ENCODE measurements at regions of chr7 and their contacts with region 1.

Region 1: GRCh38 chr7:139075031-139075652 is 34.4 kb downstream of the ZC3HAV1 start:
- DNase-seq: peak; percentile 71 to 78
- ATAC-seq: peak; percentile 92 to 94
- H3K4me3 ChIP-seq: no peak overlapping the region
- H3K27ac ChIP-seq: peak overlapping the region; percentile 46 to 73; a peak in 5 of 6 replicates
- H3K4me1 ChIP-seq: peaks cover 7% of the 10 kb centered on the region; the same call in 1 of the 3 replicates
- CTCF ChIP-seq: peak; percentile 91
- EP300 ChIP-seq: no peak
- POLR2A ChIP-seq: no peak
- RAD21 ChIP-seq: peak; percentile 69 to 71

Region 2: GRCh38 chr7:138584696-138585095 is 490.4 kb before region 1 on chr7:
- CTCF ChIA-PET with region 1: no interaction called
- POLR2A ChIA-PET with region 1: no interaction called
- DNase-seq: no peak
- ATAC-seq: no peak
- H3K4me3 ChIP-seq: no peak overlapping the region
- H3K27ac ChIP-seq: no peak overlapping the region
- H3K4me1 ChIP-seq: no peaks in the 10 kb centered on the region
- CTCF ChIP-seq: no peak
- EP300 ChIP-seq: no peak
- POLR2A ChIP-seq: no peak
- RAD21 ChIP-seq: no peak

Region 3: DNA sequence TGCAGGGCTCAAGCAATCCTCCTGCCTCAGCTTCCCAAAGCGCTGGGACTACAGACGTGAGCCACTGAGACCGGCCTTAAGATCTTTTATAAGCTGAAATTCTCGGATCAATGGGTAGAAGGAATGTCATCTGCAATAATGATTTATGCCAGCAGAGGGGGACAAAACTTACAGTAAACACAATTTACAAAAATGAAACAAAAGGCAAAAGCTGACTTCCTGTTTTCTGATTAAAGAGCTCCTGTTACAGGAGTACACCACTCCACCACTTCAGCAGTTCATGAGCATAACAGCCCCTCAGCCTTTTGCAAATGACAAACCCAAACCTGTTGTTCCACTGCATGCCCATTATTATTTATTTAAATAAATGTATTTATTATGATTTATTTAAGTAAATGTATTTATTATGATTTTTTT is 188.6 kb before region 1 on chr7:
- CTCF ChIA-PET with region 1: interaction called, 27 read pairs
- POLR2A ChIA-PET with region 1: no interaction called
- DNase-seq: peak; percentile 55 to 67
- ATAC-seq: no peak
- H3K4me3 ChIP-seq: no peak overlapping the region
- H3K27ac ChIP-seq: peak overlapping the region in 1 of 2 experiments; percentile 60; a peak in 3 of 6 replicates
- H3K4me1 ChIP-seq: peaks cover 27% of the 10 kb centered on the region
- CTCF ChIP-seq: peak; percentile 65
- EP300 ChIP-seq: no peak
- POLR2A ChIP-seq: no peak
- RAD21 ChIP-seq: peak; percentile 60 to 64

Region 4: GRCh38 chr7:139023076-139023475 is 52.1 kb before region 1 on chr7:
- CTCF ChIA-PET with region 1: interaction called, 35 read pairs
- POLR2A ChIA-PET with region 1: no interaction called
- DNase-seq: no peak
- ATAC-seq: no peak
- H3K4me3 ChIP-seq: no peak overlapping the region
- H3K27ac ChIP-seq: 0 out of 6 replicates have a peak overlapping the region, but pooled peaks of 1 of the 2 experiments have one; percentile 29
- H3K4me1 ChIP-seq: peaks cover 11% of the 10 kb centered on the region; the same call in 2 of the 3 replicates
- CTCF ChIP-seq: no peak
- EP300 ChIP-seq: no peak
- POLR2A ChIP-seq: no peak
- RAD21 ChIP-seq: no peak

Region 5: GRCh38 chr7:139049936-139050335 is 25.2 kb before region 1 on chr7:
- CTCF ChIA-PET with region 1: interaction called, 17 read pairs
- POLR2A ChIA-PET with region 1: no interaction called
- DNase-seq: no peak
- ATAC-seq: no peak
- H3K4me3 ChIP-seq: no peak overlapping the region
- H3K27ac ChIP-seq: no peak overlapping the region
- H3K4me1 ChIP-seq: peaks cover 2% of the 10 kb centered on the region; the same call in 1 of the 3 replicates
- CTCF ChIP-seq: no peak
- EP300 ChIP-seq: no peak
- POLR2A ChIP-seq: no peak
- RAD21 ChIP-seq: no peak

Region 6: DNA sequence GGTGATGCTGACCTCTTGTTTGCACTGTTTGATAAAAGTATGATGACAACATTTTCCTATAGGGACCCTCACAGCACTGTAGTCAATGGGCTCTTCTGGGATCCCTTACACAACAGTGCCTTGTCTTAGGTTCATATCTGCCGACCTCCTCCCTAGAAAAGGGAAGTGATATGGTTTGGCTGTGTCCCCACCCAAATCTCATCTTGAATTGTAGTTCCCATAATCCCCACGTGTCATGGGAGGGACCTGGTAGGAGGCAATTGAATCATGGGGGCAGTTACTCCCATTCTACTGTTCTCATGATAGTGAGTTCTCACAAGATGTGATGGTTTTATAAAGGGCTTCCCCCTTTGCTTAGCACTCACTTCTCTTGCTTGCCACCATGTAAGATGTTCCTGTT is 11.3 kb after region 1 on chr7:
- CTCF ChIA-PET with region 1: interaction called, 47 read pairs
- POLR2A ChIA-PET with region 1: no interaction called
- DNase-seq: no peak
- ATAC-seq: no peak
- H3K4me3 ChIP-seq: no peak overlapping the region
- H3K27ac ChIP-seq: no peak overlapping the region
- H3K4me1 ChIP-seq: no peaks in the 10 kb centered on the region
- CTCF ChIP-seq: no peak
- EP300 ChIP-seq: no peak
- POLR2A ChIP-seq: no peak
- RAD21 ChIP-seq: no peak

Region 7: GRCh38 chr7:139133335-139134139 is 58.4 kb after region 1 on chr7:
- CTCF ChIA-PET with region 1: interaction called, 17 read pairs
- POLR2A ChIA-PET with region 1: no interaction called
- DNase-seq: peak; percentile 87 to 90
- ATAC-seq: peak; percentile 99
- H3K4me3 ChIP-seq: peak overlapping the region; percentile 61
- H3K27ac ChIP-seq: peak overlapping the region; percentile 73 to 83
- H3K4me1 ChIP-seq: peaks cover 12% of the 10 kb centered on the region; the same call in 2 of the 3 replicates
- CTCF ChIP-seq: no peak
- EP300 ChIP-seq: no peak
- POLR2A ChIP-seq: peak; percentile 83
- RAD21 ChIP-seq: peak in 1 of 2 experiments; percentile 40; a peak in 3 of 5 replicates

Region 8: GRCh38 chr7:139180700-139181311 is 105.7 kb after region 1 on chr7:
- CTCF ChIA-PET with region 1: no interaction called
- POLR2A ChIA-PET with region 1: no interaction called
- DNase-seq: no peak
- ATAC-seq: no peak
- H3K4me3 ChIP-seq: no peak overlapping the region
- H3K27ac ChIP-seq: no peak overlapping the region
- H3K4me1 ChIP-seq: no peaks in the 10 kb centered on the region
- CTCF ChIP-seq: no peak
- EP300 ChIP-seq: no peak
- POLR2A ChIP-seq: no peak
- RAD21 ChIP-seq: no peak

Region 9: GRCh38 chr7:139730746-139731612 is 655.8 kb after region 1 on chr7:
- CTCF ChIA-PET with region 1: no interaction called
- POLR2A ChIA-PET with region 1: no interaction called
- DNase-seq: no peak
- ATAC-seq: peak; percentile 19 to 41; a peak in 4 of 6 replicates
- H3K4me3 ChIP-seq: peak overlapping the region; percentile 20; the same call in 1 of the 3 replicates
- H3K27ac ChIP-seq: peak overlapping the region; percentile 77 to 83
- H3K4me1 ChIP-seq: peaks cover 67% of the 10 kb centered on the region
- CTCF ChIP-seq: no peak
- EP300 ChIP-seq: no peak
- POLR2A ChIP-seq: no peak
- RAD21 ChIP-seq: no peak

Measured in A549 (cell line).